Endothelial cell of umbilical vein (primary cell): ENCODE measurements at regions of chr6 and their contacts with region 1.

Region 1: DNA sequence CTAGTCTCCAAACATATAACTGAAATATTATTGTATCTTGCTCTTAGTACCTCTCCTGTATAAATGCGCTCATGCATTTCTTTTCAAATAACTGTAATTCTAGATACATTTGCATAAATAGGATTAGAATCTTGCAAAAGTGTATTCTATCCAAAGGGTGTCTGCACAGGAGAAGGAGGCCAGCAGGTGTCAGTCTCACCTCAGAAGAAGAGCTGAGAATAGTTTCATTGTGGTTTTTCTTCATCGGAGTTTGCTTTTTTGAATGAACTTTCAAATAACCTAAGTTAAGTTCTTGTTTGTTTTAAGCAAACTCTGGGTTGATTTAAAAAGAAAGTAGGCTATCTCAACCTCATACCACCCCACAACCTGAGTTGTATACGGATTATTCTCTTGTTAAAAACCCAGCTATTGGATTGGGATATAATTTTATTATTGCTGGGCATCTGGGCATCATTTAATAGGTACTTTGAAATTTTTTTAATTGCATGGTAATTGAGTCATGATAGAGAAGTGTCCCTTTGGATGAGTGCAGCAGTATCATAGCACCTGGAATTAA is 125.0 kb upstream of the MLIP start:
- DNase-seq: peak; percentile 75
- H3K4me3 ChIP-seq: no peak overlapping the region
- H3K27ac ChIP-seq: no peak overlapping the region
- H3K4me1 ChIP-seq: peaks cover 13% of the 10 kb centered on the region
- H3K27me3 ChIP-seq: no peaks in the 10 kb centered on the region
- CTCF ChIP-seq: peak; percentile 65 to 68
- POLR2A ChIP-seq: no peak

Region 2: GRCh38 chr6:53728570-53729194 is 257.6 kb before region 1 on chr6:
- CTCF ChIA-PET with region 1: no interaction called
- POLR2A ChIA-PET with region 1: no interaction called
- dilution Hi-C with region 1: no loop called
- intact Hi-C with region 1: no loop called
- DNase-seq: peak; percentile 43
- H3K4me3 ChIP-seq: no peak overlapping the region
- H3K27ac ChIP-seq: no peak overlapping the region
- H3K4me1 ChIP-seq: peaks cover under 1% of the 10 kb centered on the region
- H3K27me3 ChIP-seq: no peaks in the 10 kb centered on the region
- CTCF ChIP-seq: peak; percentile 66 to 77
- POLR2A ChIP-seq: no peak

Region 3: GRCh38 chr6:53794720-53795253 is 191.5 kb before region 1 on chr6 and contains the start of gene LRRC1:
- CTCF ChIA-PET with region 1: interaction called, 10 read pairs
- POLR2A ChIA-PET with region 1: no interaction called
- dilution Hi-C with region 1: no loop called
- intact Hi-C with region 1: no loop called
- DNase-seq: peak; percentile 95
- H3K4me3 ChIP-seq: peak within 1 kb of the TSS; percentile 58 to 76 (median 72)
- H3K27ac ChIP-seq: peak within 1 kb of the TSS; percentile 43
- H3K4me1 ChIP-seq: peaks cover 25% of the 10 kb centered on the region
- H3K27me3 ChIP-seq: no peaks in the 10 kb centered on the region
- CTCF ChIP-seq: no peak
- POLR2A ChIP-seq: peak; percentile 83
- total RNA-seq, gene LRRC1: 10.6 and 11.7 TPM in 2 replicates

Region 4: GRCh38 chr6:54191461-54191860 is 205.2 kb after region 1 on chr6:
- CTCF ChIA-PET with region 1: interaction called, 10 read pairs
- POLR2A ChIA-PET with region 1: no interaction called
- dilution Hi-C with region 1: no loop called
- intact Hi-C with region 1: loop called (anchors 5 kb)
- DNase-seq: peak; percentile 79
- H3K4me3 ChIP-seq: no peak overlapping the region
- H3K27ac ChIP-seq: no peak overlapping the region
- H3K4me1 ChIP-seq: peaks cover 25% of the 10 kb centered on the region
- H3K27me3 ChIP-seq: no peaks in the 10 kb centered on the region
- CTCF ChIP-seq: no peak
- POLR2A ChIP-seq: no peak

Region 5: DNA sequence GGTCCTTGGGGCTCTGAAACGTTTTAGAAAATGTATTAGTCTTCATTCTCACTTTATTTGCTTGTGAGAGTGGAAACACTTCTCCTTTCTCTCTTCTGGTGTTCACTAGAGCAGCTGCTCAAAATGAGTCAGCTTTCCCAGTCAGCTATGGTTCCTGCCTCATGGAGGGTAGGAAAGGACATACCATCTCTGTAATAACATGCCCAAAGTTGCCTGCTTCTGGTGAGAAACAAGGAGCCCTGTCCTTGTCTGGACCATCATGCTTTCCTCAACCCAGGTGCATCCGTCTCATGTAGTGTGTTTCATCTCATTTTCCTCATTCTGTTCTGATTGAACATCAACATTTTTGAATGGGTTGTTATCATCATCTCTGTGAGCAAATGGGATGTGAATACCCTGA is 304.9 kb after region 1 on chr6:
- CTCF ChIA-PET with region 1: interaction called, 5 read pairs
- POLR2A ChIA-PET with region 1: no interaction called
- dilution Hi-C with region 1: no loop called
- intact Hi-C with region 1: loop called (anchors 1 kb)
- DNase-seq: peak; percentile 94
- H3K4me3 ChIP-seq: no peak overlapping the region
- H3K27ac ChIP-seq: peak overlapping the region; percentile 95
- H3K4me1 ChIP-seq: peaks cover 33% of the 10 kb centered on the region
- H3K27me3 ChIP-seq: no peaks in the 10 kb centered on the region
- CTCF ChIP-seq: no peak
- POLR2A ChIP-seq: peak; percentile 22

Region 6: DNA sequence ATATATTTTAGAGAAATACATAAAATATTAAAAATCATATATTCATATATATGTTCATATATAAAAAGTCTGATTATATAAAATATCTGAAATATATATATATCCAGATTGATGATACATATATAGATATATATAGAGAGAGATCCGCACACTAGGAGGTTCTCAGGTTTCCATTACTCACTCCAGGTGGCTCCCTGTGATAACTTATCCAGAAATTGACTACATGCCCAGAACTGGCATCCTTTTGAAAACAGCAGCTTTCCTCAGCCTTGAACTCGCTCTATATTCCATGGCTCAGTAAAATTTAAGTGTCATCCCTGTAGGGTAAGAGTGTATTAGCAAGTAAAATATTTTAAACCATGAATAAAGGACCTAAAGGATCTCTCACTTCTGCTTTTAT is 528.8 kb after region 1 on chr6:
- CTCF ChIA-PET with region 1: interaction called, 3 read pairs
- POLR2A ChIA-PET with region 1: no interaction called
- dilution Hi-C with region 1: no loop called
- intact Hi-C with region 1: loop called (anchors 10 kb)
- DNase-seq: peak; percentile 61
- H3K4me3 ChIP-seq: no peak overlapping the region
- H3K27ac ChIP-seq: no peak overlapping the region
- H3K4me1 ChIP-seq: no peaks in the 10 kb centered on the region
- H3K27me3 ChIP-seq: no peaks in the 10 kb centered on the region
- CTCF ChIP-seq: no peak
- POLR2A ChIP-seq: no peak

Region 7: DNA sequence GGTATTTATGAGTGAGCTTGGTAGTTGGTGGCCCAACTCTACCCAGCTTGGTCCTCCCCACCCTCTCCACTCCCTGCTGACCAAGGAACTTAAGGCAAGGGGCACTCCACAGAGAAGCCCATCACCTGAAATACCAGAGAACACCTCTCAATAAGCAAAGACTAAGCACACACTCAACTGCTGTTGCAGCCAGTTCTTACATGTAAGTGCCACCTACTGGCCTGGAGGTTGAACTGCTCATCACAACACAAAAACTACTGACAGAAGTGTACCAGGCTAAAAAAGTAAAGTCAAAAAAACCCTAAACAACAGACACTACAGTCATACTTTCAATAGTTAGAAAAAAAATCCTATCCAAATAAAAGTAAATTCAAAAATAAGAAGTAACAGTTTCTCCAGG is 1006.5 kb after region 1 on chr6:
- CTCF ChIA-PET with region 1: interaction called, 14 read pairs
- POLR2A ChIA-PET with region 1: no interaction called
- dilution Hi-C with region 1: no loop called
- intact Hi-C with region 1: loop called (anchors 10 kb)
- DNase-seq: no peak
- H3K4me3 ChIP-seq: no peak overlapping the region
- H3K27ac ChIP-seq: no peak overlapping the region
- H3K4me1 ChIP-seq: no peaks in the 10 kb centered on the region
- H3K27me3 ChIP-seq: no peaks in the 10 kb centered on the region
- CTCF ChIP-seq: peak in 1 of 2 donors; percentile 29
- POLR2A ChIP-seq: no peak